ENCODE measurements at regions of chr6 and their contacts with region 1.

Region 1: GRCh38 chr6:111478749-111479148 is 4.3 kb downstream of the REV3L start:
- DNase-seq: no peak
- H3K4me3 ChIP-seq: no peak overlapping the region
- H3K4me3 Mint-ChIP-seq: no peak overlapping the region
- H3K27ac Mint-ChIP-seq: no peak overlapping the region
- H3K4me1 ChIP-seq: peaks cover 17% of the 10 kb centered on the region
- H3K4me1 Mint-ChIP-seq: peaks cover 21% of the 10 kb centered on the region
- H3K27me3 ChIP-seq: no peaks in the 10 kb centered on the region
- H3K27me3 Mint-ChIP-seq: no peaks in the 10 kb centered on the region
- CTCF ChIP-seq: peak in 1 of 2 experiments; percentile 24

Region 2: DNA sequence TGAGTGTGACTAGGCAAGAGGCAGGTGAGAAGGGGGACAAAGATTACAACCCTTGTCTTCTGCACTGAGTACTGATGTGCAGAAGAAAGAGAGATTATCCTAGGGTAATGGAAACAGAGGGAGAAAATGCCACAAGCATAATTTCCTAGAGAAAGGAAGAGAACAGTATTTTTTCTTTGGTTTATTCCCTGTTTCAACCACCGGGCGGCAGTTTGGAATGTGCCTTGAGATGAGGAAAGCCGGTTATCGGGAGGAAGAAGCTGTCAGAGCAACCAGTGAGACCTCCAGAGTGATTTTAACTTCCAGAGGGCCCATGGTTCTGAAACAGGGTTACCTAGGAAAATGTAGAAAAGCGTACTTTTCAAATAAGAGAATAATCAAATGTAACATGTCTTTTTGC is 117.1 kb before region 1 on chr6:
- CTCF ChIA-PET with region 1: interaction called, 10 read pairs
- POLR2A ChIA-PET with region 1: no interaction called
- intact Hi-C with region 1: loop called (anchors 1 kb)
- DNase-seq: peak; percentile 48 to 57
- H3K4me3 ChIP-seq: no peak overlapping the region
- H3K4me3 Mint-ChIP-seq: no peak overlapping the region
- H3K27ac Mint-ChIP-seq: no peak overlapping the region
- H3K4me1 ChIP-seq: no peaks in the 10 kb centered on the region
- H3K4me1 Mint-ChIP-seq: no peaks in the 10 kb centered on the region
- H3K27me3 ChIP-seq: no peaks in the 10 kb centered on the region
- H3K27me3 Mint-ChIP-seq: no peaks in the 10 kb centered on the region
- CTCF ChIP-seq: peak; percentile 50 to 54

Region 3: DNA sequence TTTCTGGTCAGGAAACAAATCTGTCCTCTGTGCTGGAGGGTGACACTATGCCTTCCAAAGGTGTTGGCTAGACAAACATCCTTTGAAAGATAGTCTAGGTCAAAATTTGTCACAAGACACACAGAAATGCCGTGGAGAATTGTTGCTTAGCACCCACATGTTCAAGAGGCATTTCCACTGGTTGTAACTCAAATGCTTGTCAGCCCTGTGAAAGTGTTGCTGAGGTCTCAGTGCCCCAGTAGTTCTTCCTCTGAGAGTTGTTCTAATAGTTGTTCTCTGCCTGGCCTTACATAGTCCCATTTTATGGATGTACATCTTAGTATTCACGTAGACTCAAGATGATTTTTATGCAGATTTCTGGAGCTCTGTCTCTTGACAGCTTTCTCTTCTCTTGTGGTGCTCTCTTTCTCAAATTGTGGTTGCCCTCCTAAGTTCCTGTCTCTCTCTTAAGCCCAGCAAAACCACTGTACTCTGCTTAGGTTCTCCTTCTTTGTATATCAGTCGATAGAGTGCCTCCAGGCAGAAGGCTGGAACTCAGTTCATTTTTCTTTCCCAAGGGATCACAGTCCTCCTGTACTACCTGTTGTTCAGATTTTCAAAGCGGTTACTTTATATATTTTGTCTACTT is 43.8 kb after region 1 on chr6:
- CTCF ChIA-PET with region 1: no interaction called
- POLR2A ChIA-PET with region 1: no interaction called
- intact Hi-C with region 1: no loop called
- DNase-seq: no peak
- H3K4me3 ChIP-seq: no peak overlapping the region
- H3K4me3 Mint-ChIP-seq: no peak overlapping the region
- H3K27ac Mint-ChIP-seq: no peak overlapping the region
- H3K4me1 ChIP-seq: no peaks in the 10 kb centered on the region
- H3K4me1 Mint-ChIP-seq: no peaks in the 10 kb centered on the region
- H3K27me3 ChIP-seq: no peaks in the 10 kb centered on the region
- H3K27me3 Mint-ChIP-seq: no peaks in the 10 kb centered on the region
- CTCF ChIP-seq: no peak

Measured in Caco-2 (cell line).